Activated CD4-positive, alpha-beta T cell treated with anti-CD3 and anti-CD28 coated beads, Interleukin-2, amount 10 ng/mL, durations not matched to agents 7 days and 5 days (primary cell): ENCODE measurements at regions of chr12 and their contacts with region 1.

Region 1: GRCh38 chr12:112012775-112013600 is at the starts of genes ERP29 and TMEM116:
- DNase-seq: peak; percentile 100
- H3K4me3 Mint-ChIP-seq: peak within 1 kb of the TSS; percentile 93
- H3K27ac Mint-ChIP-seq: peak within 1 kb of the TSS; percentile 98
- H3K4me1 Mint-ChIP-seq: peaks cover 48% of the 10 kb centered on the region
- H3K27me3 Mint-ChIP-seq: no peaks in the 10 kb centered on the region
- total RNA-seq, gene ERP29: 177 to 181 TPM
- total RNA-seq, gene TMEM116: 16.6 to 16.9 TPM

Region 2: GRCh38 chr12:111506260-111506659 is 506.7 kb before region 1 on chr12:
- CTCF ChIA-PET with region 1: no interaction called
- POLR2A ChIA-PET with region 1: no interaction called
- DNase-seq: no peak
- H3K4me3 Mint-ChIP-seq: no peak overlapping the region
- H3K27ac Mint-ChIP-seq: no peak overlapping the region
- H3K4me1 Mint-ChIP-seq: peaks cover 14% of the 10 kb centered on the region
- H3K27me3 Mint-ChIP-seq: no peaks in the 10 kb centered on the region

Region 3: DNA sequence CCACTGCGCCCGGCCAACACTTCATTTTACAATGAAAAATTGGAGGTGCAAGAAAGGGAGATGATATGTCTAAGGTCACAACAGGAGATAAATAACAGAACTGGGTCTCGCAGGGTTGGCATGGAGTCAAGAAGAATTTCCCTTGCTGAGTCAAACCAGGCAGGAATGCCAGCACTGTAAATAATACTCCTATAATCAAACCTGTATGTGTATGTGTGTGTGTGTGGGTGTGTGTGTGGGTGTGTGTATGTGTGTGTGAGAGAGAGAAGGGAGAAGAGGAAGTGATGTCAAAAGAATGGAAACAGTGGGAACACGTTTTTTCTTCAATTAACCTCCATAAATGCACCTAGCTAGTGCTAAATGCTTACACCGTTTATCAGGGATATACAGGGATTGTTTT is 70.4 kb before region 1 on chr12:
- CTCF ChIA-PET with region 1: interaction called, 16 read pairs
- POLR2A ChIA-PET with region 1: interaction called, 3 read pairs
- DNase-seq: no peak
- H3K4me3 Mint-ChIP-seq: no peak overlapping the region
- H3K27ac Mint-ChIP-seq: peak overlapping the region; percentile 75
- H3K4me1 Mint-ChIP-seq: peaks cover 21% of the 10 kb centered on the region
- H3K27me3 Mint-ChIP-seq: no peaks in the 10 kb centered on the region

Region 4: GRCh38 chr12:111964935-111965334 is 48.1 kb before region 1 on chr12:
- CTCF ChIA-PET with region 1: no interaction called
- POLR2A ChIA-PET with region 1: no interaction called
- DNase-seq: no peak
- H3K4me3 Mint-ChIP-seq: no peak overlapping the region
- H3K27ac Mint-ChIP-seq: no peak overlapping the region
- H3K4me1 Mint-ChIP-seq: peaks cover 10% of the 10 kb centered on the region
- H3K27me3 Mint-ChIP-seq: no peaks in the 10 kb centered on the region

Region 5: GRCh38 chr12:112046003-112046402 is 33.0 kb after region 1 on chr12:
- CTCF ChIA-PET with region 1: no interaction called
- POLR2A ChIA-PET with region 1: no interaction called
- DNase-seq: no peak
- H3K4me3 Mint-ChIP-seq: no peak overlapping the region
- H3K27ac Mint-ChIP-seq: no peak overlapping the region
- H3K4me1 Mint-ChIP-seq: no peaks in the 10 kb centered on the region
- H3K27me3 Mint-ChIP-seq: no peaks in the 10 kb centered on the region

Region 6: GRCh38 chr12:112303004-112303403 is 290.0 kb after region 1 on chr12:
- CTCF ChIA-PET with region 1: no interaction called
- POLR2A ChIA-PET with region 1: no interaction called
- DNase-seq: peak; percentile 42
- H3K4me3 Mint-ChIP-seq: no peak overlapping the region
- H3K27ac Mint-ChIP-seq: peak overlapping the region; percentile 76
- H3K4me1 Mint-ChIP-seq: peaks cover 8% of the 10 kb centered on the region
- H3K27me3 Mint-ChIP-seq: no peaks in the 10 kb centered on the region